Ascending aorta (tissue), 2 donors: ENCODE measurements at regions of chr1 and their contacts with region 1.

Region 1: GRCh38 chr1:206583707-206584648 is 28.3 kb downstream of the EIF2D start:
- DNase-seq: peak; percentile 31 to 88
- H3K4me3 ChIP-seq: no peak overlapping the region
- H3K27ac ChIP-seq: peak overlapping the region in 1 of 2 donors; percentile 34
- H3K4me1 ChIP-seq: peaks cover 0 to 5% of the 10 kb centered on the region in 2 donors
- H3K27me3 ChIP-seq: no peaks in the 10 kb centered on the region
- CTCF ChIP-seq: peak; percentile 85 to 91 (median 90)

Region 2: DNA sequence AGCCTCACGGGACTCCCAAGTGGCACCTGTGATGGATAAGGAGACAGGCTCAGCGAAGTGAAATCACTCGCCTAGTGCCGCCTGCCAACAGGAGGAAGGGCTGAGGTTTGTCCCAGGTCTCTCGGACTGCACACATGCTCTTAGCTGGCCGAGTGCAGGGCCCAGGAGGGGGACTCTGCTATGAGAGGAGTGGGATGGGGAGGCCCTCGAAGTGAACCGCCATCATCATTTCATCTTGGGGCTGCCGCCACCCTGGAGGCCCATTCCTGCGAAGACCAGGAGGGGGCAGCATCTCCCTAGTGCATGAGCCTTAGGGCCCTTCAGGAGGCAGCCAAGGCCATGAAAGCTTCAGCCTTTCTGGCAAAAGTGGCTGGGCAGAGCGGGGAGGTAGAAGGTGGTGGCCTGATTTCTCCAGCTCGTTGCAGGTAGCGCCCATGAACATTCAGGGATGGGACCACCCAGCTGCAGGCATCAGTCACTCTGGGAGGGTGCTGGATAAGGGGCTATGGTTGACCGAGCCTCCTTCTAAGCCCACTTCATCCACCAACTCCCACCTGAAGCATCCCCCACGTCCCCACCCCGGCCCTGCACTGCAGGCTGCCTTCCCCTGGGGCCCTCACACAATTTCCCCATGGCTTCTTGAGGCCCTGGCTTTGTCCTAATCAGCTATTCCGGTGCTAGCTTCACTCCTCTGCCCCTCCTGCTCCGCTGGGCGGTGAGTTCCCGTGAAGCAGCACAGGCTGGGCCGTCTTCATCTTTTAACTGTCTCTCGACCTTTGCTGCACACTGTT is 93.8 kb before region 1 on chr1:
- intact Hi-C with region 1: loop called (anchors 1 kb)
- DNase-seq: peak in 1 of 2 donors; percentile 90
- H3K4me3 ChIP-seq: no peak overlapping the region
- H3K27ac ChIP-seq: no peak overlapping the region
- H3K4me1 ChIP-seq: peaks cover 0 to 7% of the 10 kb centered on the region in 2 donors
- H3K27me3 ChIP-seq: no peaks in the 10 kb centered on the region
- CTCF ChIP-seq: peak; percentile 93 to 98 (median 98)

Region 3: GRCh38 chr1:206544562-206545257 is 39.3 kb before region 1 on chr1:
- intact Hi-C with region 1: loop called (anchors 2 kb)
- DNase-seq: peak in 1 of 2 donors; percentile 83
- H3K4me3 ChIP-seq: no peak overlapping the region
- H3K27ac ChIP-seq: no peak overlapping the region
- H3K4me1 ChIP-seq: peaks cover 0 to 17% of the 10 kb centered on the region in 2 donors
- H3K27me3 ChIP-seq: no peaks in the 10 kb centered on the region
- CTCF ChIP-seq: peak; percentile 63 to 91 (median 83)